Activated CD8-positive, alpha-beta T cell treated with anti-CD3 and anti-CD28 coated beads for 36 hours (primary cell): ENCODE measurements at regions of chr2 and their contacts with region 1.

Region 1: GRCh38 chr2:95115418-95115817 is 6.2 kb downstream of the MRPS5 start:
- DNase-seq: peak; percentile 85
- ATAC-seq: peak; percentile 97
- H3K4me3 Mint-ChIP-seq: no peak overlapping the region
- H3K27ac Mint-ChIP-seq: no peak overlapping the region
- H3K4me1 Mint-ChIP-seq: peaks cover 39% of the 10 kb centered on the region
- H3K27me3 Mint-ChIP-seq: no peaks in the 10 kb centered on the region
- CTCF ChIP-seq: peak; percentile 90

Region 2: GRCh38 chr2:94986392-94986963 is 128.9 kb before region 1 on chr2:
- CTCF ChIA-PET with region 1: interaction called, 19 read pairs
- POLR2A ChIA-PET with region 1: no interaction called
- intact Hi-C with region 1: no loop called
- DNase-seq: peak; percentile 73
- ATAC-seq: peak; percentile 75
- H3K4me3 Mint-ChIP-seq: no peak overlapping the region
- H3K27ac Mint-ChIP-seq: no peak overlapping the region
- H3K4me1 Mint-ChIP-seq: no peaks in the 10 kb centered on the region
- H3K27me3 Mint-ChIP-seq: peaks cover 9% of the 10 kb centered on the region
- CTCF ChIP-seq: peak; percentile 83

Region 3: DNA sequence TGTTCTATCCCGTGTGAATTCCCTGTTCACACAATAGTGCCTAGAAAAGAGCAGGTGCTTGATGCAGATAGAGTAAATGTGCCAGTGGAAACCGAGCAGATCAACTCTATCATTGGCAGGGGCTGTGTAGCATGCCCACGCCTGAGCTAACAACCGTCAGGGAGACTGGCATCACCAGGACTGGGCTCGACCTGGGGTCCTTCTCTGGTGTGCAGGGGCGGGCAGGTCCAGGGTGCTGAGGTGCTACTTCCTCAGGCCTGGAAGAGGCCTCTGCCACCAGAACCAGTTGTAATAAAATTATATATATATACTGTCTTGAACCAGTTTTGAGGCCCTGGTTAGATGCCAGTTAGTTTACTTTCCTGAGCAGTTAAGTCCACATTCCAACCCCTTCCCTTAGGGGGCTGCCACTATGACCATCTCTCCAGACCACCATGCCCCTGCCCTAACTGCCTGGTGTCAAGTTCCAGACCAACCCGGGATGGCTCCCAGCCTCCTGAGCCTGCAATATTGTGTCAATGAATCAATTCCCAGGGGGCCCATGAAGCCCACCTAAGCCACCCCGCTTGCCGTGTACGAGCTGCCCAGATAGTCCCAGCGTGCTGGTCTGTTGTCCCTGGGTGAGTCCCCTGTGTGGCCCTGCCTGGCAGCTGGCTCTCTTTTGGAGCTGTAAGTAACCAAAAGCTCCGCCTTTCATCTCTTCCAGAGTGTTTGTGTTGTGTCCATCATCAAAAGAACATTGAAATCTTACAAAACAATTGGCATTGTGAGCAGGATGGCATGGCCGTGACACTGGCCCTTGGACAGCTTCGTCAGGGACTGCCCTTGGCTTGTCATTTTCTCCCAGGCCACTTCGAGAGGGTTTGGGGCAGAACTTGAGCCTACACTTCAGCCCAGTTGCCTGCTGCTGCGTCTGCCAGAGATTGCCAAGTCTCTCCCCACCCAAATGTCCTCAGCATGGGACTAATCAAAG is 101.4 kb before region 1 on chr2:
- CTCF ChIA-PET with region 1: interaction called, 10 read pairs
- POLR2A ChIA-PET with region 1: interaction called, 3 read pairs
- intact Hi-C with region 1: no loop called
- DNase-seq: no peak
- ATAC-seq: no peak
- H3K4me3 Mint-ChIP-seq: no peak overlapping the region
- H3K27ac Mint-ChIP-seq: no peak overlapping the region
- H3K4me1 Mint-ChIP-seq: peaks cover 14% of the 10 kb centered on the region
- H3K27me3 Mint-ChIP-seq: no peaks in the 10 kb centered on the region
- CTCF ChIP-seq: no peak

Region 4: GRCh38 chr2:95043300-95044093 is 71.9 kb before region 1 on chr2:
- CTCF ChIA-PET with region 1: interaction called, 19 read pairs
- POLR2A ChIA-PET with region 1: no interaction called
- intact Hi-C with region 1: no loop called
- DNase-seq: peak; percentile 83
- ATAC-seq: peak; percentile 74
- H3K4me3 Mint-ChIP-seq: no peak overlapping the region
- H3K27ac Mint-ChIP-seq: peak overlapping the region; percentile 23
- H3K4me1 Mint-ChIP-seq: peaks cover 76% of the 10 kb centered on the region
- H3K27me3 Mint-ChIP-seq: no peaks in the 10 kb centered on the region
- CTCF ChIP-seq: no peak

Region 5: DNA sequence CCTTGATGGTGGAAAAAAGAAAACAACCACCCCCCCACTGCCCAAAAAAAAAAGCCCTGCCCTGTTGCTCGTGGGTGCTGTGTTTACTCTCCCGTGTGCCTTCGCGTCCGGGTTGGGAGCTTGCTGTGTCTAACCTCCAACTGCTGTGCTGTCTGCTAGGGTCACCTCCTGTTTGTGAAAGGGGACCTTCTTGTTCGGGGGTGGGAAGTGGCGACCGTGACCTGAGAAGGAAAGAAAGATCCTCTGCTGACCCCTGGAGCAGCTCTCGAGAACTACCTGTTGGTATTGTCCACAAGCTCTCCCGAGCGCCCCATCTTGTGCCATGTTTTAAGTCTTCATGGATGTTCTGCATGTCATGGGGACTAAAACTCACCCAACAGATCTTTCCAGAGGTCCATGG is 61.9 kb before region 1 on chr2:
- CTCF ChIA-PET with region 1: interaction called, 19 read pairs
- POLR2A ChIA-PET with region 1: no interaction called
- intact Hi-C with region 1: no loop called
- DNase-seq: peak; percentile 59
- ATAC-seq: no peak
- H3K4me3 Mint-ChIP-seq: no peak overlapping the region
- H3K27ac Mint-ChIP-seq: peak overlapping the region; percentile 85
- H3K4me1 Mint-ChIP-seq: peaks cover 70% of the 10 kb centered on the region
- H3K27me3 Mint-ChIP-seq: no peaks in the 10 kb centered on the region
- CTCF ChIP-seq: peak; percentile 11

Region 6: DNA sequence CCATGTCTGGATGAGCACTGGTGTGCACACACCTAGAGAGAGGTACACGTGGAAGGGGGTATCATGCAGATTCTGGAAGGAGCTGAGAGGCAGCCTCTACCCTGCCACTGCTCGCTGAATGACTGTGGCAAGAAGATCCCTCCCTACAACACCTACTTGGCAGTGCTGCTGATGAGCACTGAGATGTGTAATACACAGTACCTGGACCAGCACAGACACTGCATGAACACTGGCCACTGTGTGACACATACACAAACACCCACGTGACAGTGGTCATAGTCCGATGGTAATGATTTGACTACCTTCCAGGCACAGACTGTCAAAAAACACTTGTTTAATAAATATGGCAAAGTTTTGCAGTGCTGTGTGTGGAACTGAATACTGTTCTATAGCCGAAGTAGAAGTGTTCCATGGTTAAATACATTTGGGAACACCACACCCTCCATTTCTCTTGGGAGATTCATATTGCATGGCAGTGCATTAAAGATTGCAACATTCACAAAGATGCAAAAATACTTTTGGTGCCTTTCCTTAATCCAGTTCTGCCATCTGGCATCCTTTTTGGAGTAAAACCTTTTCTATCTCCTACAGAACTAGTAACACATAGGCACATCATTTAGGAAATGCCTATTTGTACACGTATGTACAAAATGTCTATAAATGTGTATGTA is 23.4 kb before region 1 on chr2:
- CTCF ChIA-PET with region 1: interaction called, 18 read pairs
- POLR2A ChIA-PET with region 1: no interaction called
- intact Hi-C with region 1: no loop called
- DNase-seq: no peak
- ATAC-seq: no peak
- H3K4me3 Mint-ChIP-seq: no peak overlapping the region
- H3K27ac Mint-ChIP-seq: no peak overlapping the region
- H3K4me1 Mint-ChIP-seq: peaks cover 27% of the 10 kb centered on the region
- H3K27me3 Mint-ChIP-seq: no peaks in the 10 kb centered on the region
- CTCF ChIP-seq: no peak